CD8-positive, alpha-beta T cell (primary cell): ENCODE measurements at regions of chr2 and their contacts with region 1.

Region 1: GRCh38 chr2:43226558-43226954 is at the start of gene ZFP36L2:
- DNase-seq: peak; percentile 89 to 99 (median 96)
- ATAC-seq: peak; percentile 58
- H3K4me3 ChIP-seq: peak within 1 kb of the TSS; percentile 89 to 94
- H3K4me3 Mint-ChIP-seq: peak within 1 kb of the TSS; percentile 96
- H3K27ac ChIP-seq: peak within 1 kb of the TSS; percentile 81 to 92
- H3K27ac Mint-ChIP-seq: peak within 1 kb of the TSS; percentile 94
- H3K4me1 ChIP-seq: peaks cover 23% of the 10 kb centered on the region
- H3K4me1 Mint-ChIP-seq: peaks cover 28% of the 10 kb centered on the region
- H3K27me3 ChIP-seq: no peaks in the 10 kb centered on the region
- H3K27me3 Mint-ChIP-seq: no peaks in the 10 kb centered on the region
- CTCF ChIP-seq: no peak
- total RNA-seq, gene ZFP36L2: 1,270 to 1,311 TPM

Region 2: GRCh38 chr2:42944779-42945415 is 281.7 kb before region 1 on chr2:
- CTCF ChIA-PET with region 1: interaction called, 71 read pairs
- POLR2A ChIA-PET with region 1: interaction called, 3 read pairs
- intact Hi-C with region 1: loop called (anchors 1 kb)
- DNase-seq: no peak
- ATAC-seq: no peak
- H3K4me3 ChIP-seq: no peak overlapping the region
- H3K4me3 Mint-ChIP-seq: no peak overlapping the region
- H3K27ac ChIP-seq: no peak overlapping the region
- H3K27ac Mint-ChIP-seq: no peak overlapping the region
- H3K4me1 ChIP-seq: no peaks in the 10 kb centered on the region
- H3K4me1 Mint-ChIP-seq: peaks cover 3% of the 10 kb centered on the region
- H3K27me3 ChIP-seq: no peaks in the 10 kb centered on the region
- H3K27me3 Mint-ChIP-seq: no peaks in the 10 kb centered on the region
- CTCF ChIP-seq: no peak

Region 3: GRCh38 chr2:42974721-42975717 is 251.5 kb before region 1 on chr2:
- CTCF ChIA-PET with region 1: interaction called, 82 read pairs
- POLR2A ChIA-PET with region 1: interaction called, 10 read pairs
- intact Hi-C with region 1: loop called in 1 of 2 experiments (anchors 1 kb)
- DNase-seq: peak; percentile 27 to 79 (median 60)
- ATAC-seq: peak; percentile 78
- H3K4me3 ChIP-seq: no peak overlapping the region
- H3K4me3 Mint-ChIP-seq: no peak overlapping the region
- H3K27ac ChIP-seq: no peak overlapping the region
- H3K27ac Mint-ChIP-seq: no peak overlapping the region
- H3K4me1 ChIP-seq: peaks cover 8% of the 10 kb centered on the region
- H3K4me1 Mint-ChIP-seq: peaks cover 15% of the 10 kb centered on the region
- H3K27me3 ChIP-seq: no peaks in the 10 kb centered on the region
- H3K27me3 Mint-ChIP-seq: no peaks in the 10 kb centered on the region
- CTCF ChIP-seq: peak; percentile 71

Region 4: GRCh38 chr2:43123981-43124686 is 102.4 kb before region 1 on chr2:
- CTCF ChIA-PET with region 1: interaction called, 666 read pairs
- POLR2A ChIA-PET with region 1: interaction called, 1,192 read pairs
- intact Hi-C with region 1: loop called (anchors 1 kb)
- DNase-seq: peak in 2 of 9 experiments; percentile 38 to 40
- ATAC-seq: peak; percentile 24
- H3K4me3 ChIP-seq: no peak overlapping the region
- H3K4me3 Mint-ChIP-seq: peak overlapping the region; percentile 68
- H3K27ac ChIP-seq: no peak overlapping the region
- H3K27ac Mint-ChIP-seq: peak overlapping the region; percentile 82
- H3K4me1 ChIP-seq: peaks cover 60% of the 10 kb centered on the region
- H3K4me1 Mint-ChIP-seq: peaks cover 65% of the 10 kb centered on the region
- H3K27me3 ChIP-seq: no peaks in the 10 kb centered on the region
- H3K27me3 Mint-ChIP-seq: no peaks in the 10 kb centered on the region
- CTCF ChIP-seq: no peak

Region 5: DNA sequence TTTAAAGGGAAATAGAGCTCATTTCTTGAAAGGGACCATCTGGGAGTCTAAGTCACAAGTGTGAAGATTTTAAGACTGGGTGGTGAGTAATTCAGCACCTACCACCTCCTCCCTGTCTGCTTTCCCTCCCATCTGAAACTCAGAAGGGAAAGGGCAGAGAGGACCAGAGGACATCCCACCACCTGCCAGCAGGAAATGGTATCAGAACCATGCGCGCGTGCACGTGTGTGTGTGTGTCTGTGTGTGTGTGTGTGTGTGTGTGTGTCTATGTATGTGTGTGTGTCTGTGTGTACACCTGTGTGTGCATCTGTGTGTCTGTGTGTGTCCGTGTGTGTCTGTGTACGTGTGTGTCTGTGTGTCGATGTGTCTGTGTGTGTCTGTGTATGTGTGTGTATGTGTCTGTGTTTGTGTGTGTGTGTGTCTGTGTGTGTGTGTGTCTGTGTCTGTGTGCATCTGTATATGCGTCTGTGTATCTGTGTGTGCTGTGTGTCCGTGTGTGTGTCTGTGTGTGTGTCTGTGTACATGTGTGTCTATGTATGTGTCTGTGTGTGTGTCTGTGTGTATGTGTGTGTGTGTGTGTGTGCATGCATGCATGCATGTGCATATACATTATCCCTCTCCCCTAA is 77.0 kb before region 1 on chr2:
- CTCF ChIA-PET with region 1: interaction called, 13 read pairs
- POLR2A ChIA-PET with region 1: interaction called, 1,192 read pairs
- intact Hi-C with region 1: no loop called
- DNase-seq: peak in 5 of 9 experiments; percentile 43 to 67 (median 51)
- ATAC-seq: peak; percentile 66
- H3K4me3 ChIP-seq: no peak overlapping the region
- H3K4me3 Mint-ChIP-seq: peak overlapping the region; percentile 45
- H3K27ac ChIP-seq: peak overlapping the region in 1 of 2 experiments; percentile 49
- H3K27ac Mint-ChIP-seq: peak overlapping the region; percentile 91
- H3K4me1 ChIP-seq: peaks cover 67% of the 10 kb centered on the region
- H3K4me1 Mint-ChIP-seq: peaks cover 68% of the 10 kb centered on the region
- H3K27me3 ChIP-seq: no peaks in the 10 kb centered on the region
- H3K27me3 Mint-ChIP-seq: no peaks in the 10 kb centered on the region
- CTCF ChIP-seq: no peak

Region 6: DNA sequence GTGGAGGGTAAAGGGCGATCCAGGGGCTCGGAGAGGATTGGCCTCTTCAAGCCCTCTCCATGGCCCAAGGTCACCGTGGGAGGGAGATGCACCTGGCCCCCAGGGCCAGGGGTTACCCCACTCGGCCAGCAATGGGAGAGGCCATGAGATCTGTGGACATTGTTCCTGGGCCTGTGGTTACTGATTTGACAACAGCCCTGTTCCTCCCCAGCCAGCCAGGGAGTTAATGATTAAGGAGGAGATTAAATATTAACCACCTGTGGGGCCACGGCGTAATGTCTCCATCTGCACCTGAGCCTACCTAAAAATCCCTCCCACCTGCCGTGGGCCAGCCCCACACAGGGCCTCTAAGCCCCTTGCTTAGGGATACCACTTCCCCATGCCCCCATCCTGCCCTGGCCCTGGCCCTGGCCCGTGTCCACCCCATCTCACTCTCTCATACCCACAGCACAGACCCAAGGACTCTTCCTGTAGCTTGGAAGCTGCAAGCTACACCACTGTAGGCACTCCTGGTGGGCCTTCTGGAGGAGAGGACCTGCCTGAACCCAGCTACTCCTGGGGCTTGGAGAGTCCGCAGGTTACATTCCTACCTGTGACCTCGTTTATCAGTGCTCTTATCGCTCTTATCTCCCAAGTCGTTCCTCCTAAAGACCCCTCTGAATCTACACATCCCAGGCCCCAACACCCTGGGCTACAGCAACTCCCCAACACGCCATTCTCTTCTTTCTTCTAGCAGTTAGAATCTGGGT is 32.3 kb before region 1 on chr2:
- CTCF ChIA-PET with region 1: interaction called, 17 read pairs
- POLR2A ChIA-PET with region 1: interaction called, 143 read pairs
- intact Hi-C with region 1: no loop called
- DNase-seq: no peak
- ATAC-seq: peak; percentile 0
- H3K4me3 ChIP-seq: peak overlapping the region; percentile 40 to 52
- H3K4me3 Mint-ChIP-seq: peak overlapping the region; percentile 83
- H3K27ac ChIP-seq: peak overlapping the region; percentile 68 to 88
- H3K27ac Mint-ChIP-seq: peak overlapping the region; percentile 98
- H3K4me1 ChIP-seq: peaks cover 65% of the 10 kb centered on the region
- H3K4me1 Mint-ChIP-seq: peaks cover 61% of the 10 kb centered on the region
- H3K27me3 ChIP-seq: no peaks in the 10 kb centered on the region
- H3K27me3 Mint-ChIP-seq: no peaks in the 10 kb centered on the region
- CTCF ChIP-seq: no peak